B cell (primary cell): ENCODE measurements at regions of chrX and their contacts with region 1.

Region 1: GRCh38 chrX:129678614-129679195 is 23.9 kb upstream of the APLN start:
- DNase-seq: no peak
- ATAC-seq: peak; percentile 28
- H3K4me3 ChIP-seq: peak overlapping the region in 4 of 5 experiments; percentile 37 to 58 (median 56)
- H3K4me3 Mint-ChIP-seq: peak overlapping the region; percentile 85
- H3K27ac ChIP-seq: peak overlapping the region; percentile 16 to 40
- H3K27ac Mint-ChIP-seq: peak overlapping the region; percentile 82
- H3K4me1 ChIP-seq: peaks cover 5 to 16% of the 10 kb centered on the region in 2 donors
- H3K4me1 Mint-ChIP-seq: peaks cover 12% of the 10 kb centered on the region
- H3K27me3 ChIP-seq: no peaks in the 10 kb centered on the region
- H3K27me3 Mint-ChIP-seq: no peaks in the 10 kb centered on the region
- CTCF ChIP-seq: no peak

Region 2: DNA sequence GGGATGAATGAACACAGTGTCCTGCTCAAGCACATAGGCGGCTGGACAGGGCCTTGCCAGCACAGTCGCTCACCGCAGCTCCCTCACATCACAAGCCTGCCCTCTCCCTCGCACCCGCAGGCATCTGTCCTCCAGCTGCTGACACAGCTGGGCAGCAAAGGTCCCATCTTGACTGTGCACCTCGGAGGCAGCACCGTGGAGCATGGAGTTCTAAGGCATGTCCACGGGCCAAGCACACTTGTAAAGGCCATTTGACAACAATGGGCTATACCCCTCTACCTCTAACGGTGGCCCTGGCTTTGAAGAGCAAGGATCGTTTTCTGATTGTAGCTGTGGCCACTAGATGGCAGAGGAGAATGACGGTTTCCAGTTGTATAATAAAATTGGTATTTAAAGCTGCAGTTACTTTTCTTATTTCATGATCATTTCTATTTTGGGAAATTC is 77.7 kb before region 1 on chrX:
- CTCF ChIA-PET with region 1: no interaction called
- POLR2A ChIA-PET with region 1: no interaction called
- intact Hi-C with region 1: loop called (anchors 5 kb)
- DNase-seq: peak; percentile 37
- ATAC-seq: peak; percentile 37
- H3K4me3 ChIP-seq: no peak overlapping the region
- H3K4me3 Mint-ChIP-seq: no peak overlapping the region
- H3K27ac ChIP-seq: no peak overlapping the region
- H3K27ac Mint-ChIP-seq: no peak overlapping the region
- H3K4me1 ChIP-seq: peaks cover 8 to 15% of the 10 kb centered on the region in 2 donors
- H3K4me1 Mint-ChIP-seq: peaks cover 14% of the 10 kb centered on the region
- H3K27me3 ChIP-seq: no peaks in the 10 kb centered on the region
- H3K27me3 Mint-ChIP-seq: no peaks in the 10 kb centered on the region
- CTCF ChIP-seq: peak; percentile 67

Region 3: GRCh38 chrX:129726307-129727111 is 47.8 kb after region 1 on chrX:
- CTCF ChIA-PET with region 1: no interaction called
- POLR2A ChIA-PET with region 1: no interaction called
- intact Hi-C with region 1: no loop called
- DNase-seq: peak; percentile 21
- ATAC-seq: no peak
- H3K4me3 ChIP-seq: no peak overlapping the region
- H3K4me3 Mint-ChIP-seq: no peak overlapping the region
- H3K27ac ChIP-seq: no peak overlapping the region
- H3K27ac Mint-ChIP-seq: no peak overlapping the region
- H3K4me1 ChIP-seq: peaks cover 8 to 9% of the 10 kb centered on the region in 2 donors
- H3K4me1 Mint-ChIP-seq: peaks cover 17% of the 10 kb centered on the region
- H3K27me3 ChIP-seq: no peaks in the 10 kb centered on the region
- H3K27me3 Mint-ChIP-seq: no peaks in the 10 kb centered on the region
- CTCF ChIP-seq: peak; percentile 28

Region 4: DNA sequence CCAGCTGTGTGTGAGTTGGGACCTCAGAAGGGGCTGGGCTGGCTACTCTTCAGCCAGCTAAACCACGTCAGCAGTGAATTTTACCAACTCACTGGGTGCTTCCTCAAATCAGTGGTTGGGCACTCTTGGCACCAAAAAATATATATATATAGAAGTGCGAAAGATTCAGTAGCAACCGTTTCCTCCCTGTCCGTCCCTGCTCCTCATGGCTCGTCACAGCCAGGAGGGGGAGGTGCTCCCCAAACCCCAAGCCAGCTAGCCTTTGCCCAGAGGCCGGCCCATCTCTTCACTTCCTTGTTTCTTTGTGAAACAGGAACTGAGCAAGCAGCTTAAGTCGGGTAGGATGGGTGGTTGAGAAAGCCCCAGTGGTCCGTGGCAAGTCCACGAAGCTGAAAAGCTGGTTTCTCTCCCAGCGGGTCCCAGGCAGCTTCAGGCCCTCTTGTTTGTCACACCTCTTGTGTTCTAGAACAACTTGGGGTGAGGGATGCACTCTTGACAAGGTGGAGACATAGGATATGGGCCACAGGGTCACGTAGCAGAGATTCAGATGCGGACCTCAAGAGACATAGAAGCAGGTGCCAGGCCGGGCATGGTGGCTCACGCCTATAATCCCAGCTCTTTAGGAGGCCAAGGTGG is 94.2 kb after region 1 on chrX:
- CTCF ChIA-PET with region 1: interaction called, 16 read pairs
- POLR2A ChIA-PET with region 1: interaction called, 3 read pairs
- intact Hi-C with region 1: no loop called
- DNase-seq: peak; percentile 91
- ATAC-seq: peak; percentile 71
- H3K4me3 ChIP-seq: no peak overlapping the region
- H3K4me3 Mint-ChIP-seq: peak overlapping the region; percentile 75
- H3K27ac ChIP-seq: peak overlapping the region; percentile 88 to 90
- H3K27ac Mint-ChIP-seq: peak overlapping the region; percentile 97
- H3K4me1 ChIP-seq: peaks cover 87 to 98% of the 10 kb centered on the region in 2 donors
- H3K4me1 Mint-ChIP-seq: peaks cover 72% of the 10 kb centered on the region
- H3K27me3 ChIP-seq: no peaks in the 10 kb centered on the region
- H3K27me3 Mint-ChIP-seq: no peaks in the 10 kb centered on the region
- CTCF ChIP-seq: no peak

Region 5: GRCh38 chrX:129781134-129781672 is 102.5 kb after region 1 on chrX:
- CTCF ChIA-PET with region 1: interaction called, 9 read pairs
- POLR2A ChIA-PET with region 1: no interaction called
- intact Hi-C with region 1: loop called (anchors 5 kb)
- DNase-seq: peak; percentile 86
- ATAC-seq: peak; percentile 68
- H3K4me3 ChIP-seq: peak overlapping the region; percentile 65 to 83 (median 78)
- H3K4me3 Mint-ChIP-seq: peak overlapping the region; percentile 89
- H3K27ac ChIP-seq: peak overlapping the region; percentile 97 to 99
- H3K27ac Mint-ChIP-seq: peak overlapping the region; percentile 97
- H3K4me1 ChIP-seq: peaks cover 76 to 81% of the 10 kb centered on the region in 2 donors
- H3K4me1 Mint-ChIP-seq: peaks cover 66% of the 10 kb centered on the region
- H3K27me3 ChIP-seq: no peaks in the 10 kb centered on the region
- H3K27me3 Mint-ChIP-seq: no peaks in the 10 kb centered on the region
- CTCF ChIP-seq: no peak

Region 6: GRCh38 chrX:129905787-129906580 is 227.3 kb after region 1 on chrX and contains the start of gene UTP14A:
- CTCF ChIA-PET with region 1: no interaction called
- POLR2A ChIA-PET with region 1: interaction called, 3 read pairs
- intact Hi-C with region 1: loop called (anchors 5 kb)
- DNase-seq: peak; percentile 87
- ATAC-seq: peak; percentile 95
- H3K4me3 ChIP-seq: peak within 1 kb of the TSS; percentile 66 to 81 (median 76)
- H3K4me3 Mint-ChIP-seq: peak within 1 kb of the TSS; percentile 94
- H3K27ac ChIP-seq: peak within 1 kb of the TSS; percentile 53 to 69
- H3K27ac Mint-ChIP-seq: peak within 1 kb of the TSS; percentile 93
- H3K4me1 ChIP-seq: peaks cover 4 to 12% of the 10 kb centered on the region in 2 donors
- H3K4me1 Mint-ChIP-seq: peaks cover 9% of the 10 kb centered on the region
- H3K27me3 ChIP-seq: no peaks in the 10 kb centered on the region
- H3K27me3 Mint-ChIP-seq: no peaks in the 10 kb centered on the region
- CTCF ChIP-seq: no peak
- total RNA-seq, gene UTP14A: 21.5 and 23.0 TPM in 2 replicates